ENCODE measurements at regions of chr1 and their contacts with region 1.

Region 1: DNA sequence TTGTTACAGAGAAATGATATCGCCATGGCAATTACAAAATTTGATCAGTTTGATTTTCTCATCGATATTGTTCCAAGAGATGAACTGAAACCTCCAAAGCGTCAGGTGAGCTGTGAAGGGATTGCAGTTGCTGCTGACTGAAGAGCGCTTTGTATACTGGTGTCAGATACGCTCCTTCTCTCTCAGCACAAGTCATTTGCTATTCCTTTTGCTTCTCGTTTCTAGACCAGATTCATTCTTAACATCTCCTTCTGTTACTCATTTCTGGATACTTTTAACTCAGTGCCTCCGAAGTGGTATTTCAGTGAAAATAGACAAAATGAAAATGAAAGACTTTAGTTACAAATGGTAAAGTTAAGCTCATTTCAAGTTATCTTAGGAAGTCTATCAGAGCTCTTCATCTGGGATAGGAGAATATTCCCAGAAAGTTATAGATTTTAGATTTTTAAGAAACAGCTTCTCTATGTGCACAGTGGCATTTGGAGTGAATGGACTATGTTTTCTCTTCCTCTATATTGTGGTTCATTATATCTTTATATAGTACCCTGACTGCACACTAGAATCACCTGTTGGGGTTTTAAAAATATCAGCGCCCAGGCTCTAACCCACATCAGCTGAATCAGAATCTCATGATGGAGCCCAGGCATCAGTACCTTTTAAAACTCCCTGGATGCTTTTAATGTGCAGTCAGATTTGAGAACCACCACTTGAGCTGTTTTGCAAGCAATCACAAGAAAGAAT is 30.3 kb upstream of the KCNQ4 start:
- DNase-seq: no peak
- H3K4me3 Mint-ChIP-seq: peak overlapping the region; percentile 70
- H3K27ac Mint-ChIP-seq: peak overlapping the region; percentile 92
- H3K4me1 Mint-ChIP-seq: peaks cover 43% of the 10 kb centered on the region
- H3K27me3 Mint-ChIP-seq: no peaks in the 10 kb centered on the region

Region 2: DNA sequence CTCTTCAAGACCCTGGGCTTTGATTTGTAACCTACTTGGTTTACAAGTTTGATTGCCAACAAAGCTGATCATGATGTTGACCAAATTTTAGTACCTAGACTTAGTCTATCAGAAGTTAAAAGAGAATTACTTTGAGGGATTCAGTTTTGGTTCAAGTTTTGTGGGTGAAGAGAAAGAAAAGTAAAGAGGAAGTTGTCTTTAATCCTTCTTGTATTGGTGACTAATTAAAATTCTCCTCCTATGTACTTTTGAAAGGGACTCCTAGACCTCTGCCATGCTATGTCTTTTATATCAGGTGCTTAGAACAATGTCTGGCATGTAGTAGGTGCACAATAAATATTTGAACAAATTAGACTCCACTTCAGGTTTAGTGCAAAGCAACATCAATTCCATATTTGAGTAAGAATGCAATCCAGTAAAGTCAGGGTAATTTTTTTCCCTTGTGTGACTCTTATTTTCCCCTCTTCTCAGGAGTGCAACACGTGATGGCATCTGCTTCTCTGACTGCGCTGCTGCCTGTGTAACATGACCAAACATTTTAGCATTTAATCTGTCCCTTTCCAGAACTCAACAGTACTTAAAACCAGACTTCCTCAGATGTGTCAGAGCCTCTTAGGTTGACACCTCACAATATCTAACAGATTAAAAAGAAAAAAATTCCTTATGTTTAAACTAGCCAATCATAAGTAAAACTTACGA is 10.8 kb before region 1 on chr1:
- intact Hi-C with region 1: loop called (anchors 1 kb)
- DNase-seq: no peak
- H3K4me3 Mint-ChIP-seq: no peak overlapping the region
- H3K27ac Mint-ChIP-seq: peak overlapping the region; percentile 81
- H3K4me1 Mint-ChIP-seq: peaks cover 41% of the 10 kb centered on the region
- H3K27me3 Mint-ChIP-seq: no peaks in the 10 kb centered on the region

Region 3: DNA sequence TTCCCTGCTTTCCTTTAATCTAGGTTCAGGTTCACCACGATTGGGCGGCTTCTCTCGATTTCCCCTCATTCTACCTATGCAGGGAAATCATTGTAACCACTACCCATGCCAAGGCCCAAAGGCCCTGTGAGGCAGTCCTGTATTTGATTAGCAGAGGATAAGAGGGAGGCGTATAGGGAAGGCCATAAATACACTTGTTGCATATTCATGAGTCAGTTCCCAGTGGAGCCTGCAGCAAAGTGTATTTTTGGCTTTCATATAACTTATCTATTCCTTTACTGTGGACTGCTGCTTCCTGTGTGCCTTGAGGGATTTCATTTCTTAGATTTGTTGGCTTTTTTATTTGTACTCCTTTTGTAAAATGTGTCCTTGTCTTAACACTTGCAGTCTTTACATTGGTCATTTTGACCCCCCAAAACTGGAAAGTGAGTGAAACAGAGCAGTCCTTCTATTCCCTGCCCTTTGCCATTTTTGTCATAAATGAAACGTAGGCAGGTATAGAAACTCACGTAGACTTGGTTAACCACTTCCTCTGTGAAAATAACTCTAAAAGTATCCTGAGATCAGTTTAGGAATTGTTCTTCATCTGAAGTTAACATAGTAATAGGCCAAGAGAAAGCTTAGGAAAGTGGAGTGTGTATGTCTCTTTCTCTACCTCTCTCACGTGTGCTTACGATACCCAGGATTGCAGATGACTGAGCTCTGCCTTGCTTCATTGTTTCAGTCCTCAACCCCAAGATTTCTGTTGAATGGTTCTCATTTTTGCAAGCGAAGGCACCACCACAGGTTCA is 10.6 kb after region 1 on chr1:
- intact Hi-C with region 1: loop called (anchors 1 kb)
- DNase-seq: no peak
- H3K4me3 Mint-ChIP-seq: peak overlapping the region; percentile 77
- H3K27ac Mint-ChIP-seq: peak overlapping the region; percentile 90
- H3K4me1 Mint-ChIP-seq: peaks cover 58% of the 10 kb centered on the region
- H3K27me3 Mint-ChIP-seq: no peaks in the 10 kb centered on the region

Region 4: DNA sequence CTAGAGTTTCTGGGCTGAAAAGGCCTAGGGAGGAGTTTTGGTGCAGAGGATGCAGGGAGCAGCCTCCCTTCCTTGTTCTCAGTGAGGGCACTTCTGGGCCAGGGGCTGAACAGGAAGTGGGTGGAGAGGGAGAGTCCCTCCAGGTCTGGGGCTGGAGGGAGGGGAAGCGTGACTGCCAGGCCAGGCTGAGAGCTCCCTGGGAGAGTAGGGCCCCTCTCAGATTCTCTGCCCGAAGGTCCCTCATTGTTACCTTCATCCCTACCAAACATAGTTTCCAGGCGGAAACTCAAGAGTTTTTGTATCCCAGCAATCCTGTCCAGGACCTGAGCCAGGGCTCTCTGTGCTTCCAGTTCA is 72.1 kb after region 1 on chr1:
- intact Hi-C with region 1: no loop called
- DNase-seq: no peak
- H3K4me3 Mint-ChIP-seq: no peak overlapping the region
- H3K27ac Mint-ChIP-seq: peak overlapping the region; percentile 48
- H3K4me1 Mint-ChIP-seq: peaks cover 24% of the 10 kb centered on the region
- H3K27me3 Mint-ChIP-seq: no peaks in the 10 kb centered on the region

Region 5: GRCh38 chr1:40939320-40940059 is 186.2 kb after region 1 on chr1:
- intact Hi-C with region 1: no loop called
- DNase-seq: no peak
- H3K4me3 Mint-ChIP-seq: no peak overlapping the region
- H3K27ac Mint-ChIP-seq: no peak overlapping the region
- H3K4me1 Mint-ChIP-seq: no peaks in the 10 kb centered on the region
- H3K27me3 Mint-ChIP-seq: peaks cover 4% of the 10 kb centered on the region

Region 6: GRCh38 chr1:41023279-41023990 is 270.1 kb after region 1 on chr1:
- intact Hi-C with region 1: no loop called
- DNase-seq: no peak
- H3K4me3 Mint-ChIP-seq: no peak overlapping the region
- H3K27ac Mint-ChIP-seq: no peak overlapping the region
- H3K4me1 Mint-ChIP-seq: no peaks in the 10 kb centered on the region
- H3K27me3 Mint-ChIP-seq: no peaks in the 10 kb centered on the region

Measured in activated T-helper 1 cell treated with anti-CD3 and anti-CD28 coated beads, Interleukin-12 subunit alpha, Interleukin-12 subunit beta, Interleukin-2, Interleukin-4 antibody, amounts not matched to agents 30 ng/mL and 10 ng/mL and 1 ng/mL, durations not matched to agents 14 hours and 24 hours and 36 hours (primary cell).